ENCODE measurements at regions of chr20 and their contacts with region 1.

Region 1: GRCh38 chr20:13771853-13772453 is 12.8 kb downstream of the ESF1 start:
- DNase-seq: peak in 4 of 9 donors; percentile 8 to 30 (median 18)
- ATAC-seq: peak; percentile 48
- H3K4me3 ChIP-seq: no peak overlapping the region
- H3K4me3 Mint-ChIP-seq: no peak overlapping the region
- H3K27ac ChIP-seq: no peak overlapping the region
- H3K27ac Mint-ChIP-seq: no peak overlapping the region
- H3K4me1 ChIP-seq: no peaks in the 10 kb centered on the region
- H3K4me1 Mint-ChIP-seq: peaks cover 2 to 20% (median 8%) of the 10 kb centered on the region in 7 donors
- H3K27me3 ChIP-seq: no peaks in the 10 kb centered on the region
- H3K27me3 Mint-ChIP-seq: no peaks in the 10 kb centered on the region

Region 2: DNA sequence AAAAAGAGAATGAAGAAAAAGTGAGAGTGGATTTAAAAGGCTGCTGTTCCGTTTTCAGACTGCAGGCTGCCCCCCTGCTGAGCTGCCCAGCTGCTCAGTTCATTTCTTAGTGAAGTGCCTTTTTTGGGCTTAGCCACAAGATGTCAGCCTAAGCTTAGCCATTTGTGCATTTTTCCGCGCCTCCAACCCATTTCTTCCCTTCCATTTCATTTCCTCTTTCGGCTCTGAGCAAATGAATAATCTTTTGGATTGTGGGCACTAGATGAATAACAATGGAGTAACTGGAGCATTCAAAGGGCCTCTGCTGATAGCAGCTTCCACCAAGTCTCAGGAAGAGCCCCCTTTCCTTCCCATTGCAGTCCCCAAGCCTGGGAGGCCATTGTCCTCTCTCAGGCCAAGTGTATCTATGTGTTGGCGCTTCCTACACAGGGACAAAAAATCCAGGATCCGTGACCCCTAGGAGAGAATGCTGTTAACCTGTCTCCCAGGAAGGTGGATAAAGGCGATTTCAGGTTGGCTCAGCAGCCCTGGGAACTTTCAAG is 846.7 kb before region 1 on chr20:
- CTCF ChIA-PET with region 1: no interaction called
- POLR2A ChIA-PET with region 1: no interaction called
- intact Hi-C with region 1: loop called in 1 of 2 experiments (anchors 5 kb)
- DNase-seq: peak in 6 of 9 donors; percentile 5 to 48 (median 20)
- ATAC-seq: peak; percentile 73
- H3K4me3 ChIP-seq: no peak overlapping the region
- H3K4me3 Mint-ChIP-seq: peak overlapping the region in 1 of 10 donors; percentile 23
- H3K27ac ChIP-seq: no peak overlapping the region
- H3K27ac Mint-ChIP-seq: no peak overlapping the region
- H3K4me1 ChIP-seq: no peaks in the 10 kb centered on the region
- H3K4me1 Mint-ChIP-seq: peaks cover 0 to 15% (median 0%) of the 10 kb centered on the region in 7 donors
- H3K27me3 ChIP-seq: peaks cover 0 to 2% of the 10 kb centered on the region in 2 donors
- H3K27me3 Mint-ChIP-seq: peaks cover 0 to 27% (median 6%) of the 10 kb centered on the region in 5 donors

Region 3: GRCh38 chr20:13119583-13119982 is 652.4 kb before region 1 on chr20:
- CTCF ChIA-PET with region 1: interaction called, 5 read pairs
- POLR2A ChIA-PET with region 1: no interaction called
- intact Hi-C with region 1: loop called (anchors 1 to 2 kb)
- DNase-seq: peak in 8 of 9 donors; percentile 6 to 76 (median 66)
- ATAC-seq: peak; percentile 82
- H3K4me3 ChIP-seq: no peak overlapping the region
- H3K4me3 Mint-ChIP-seq: no peak overlapping the region
- H3K27ac ChIP-seq: no peak overlapping the region
- H3K27ac Mint-ChIP-seq: no peak overlapping the region
- H3K4me1 ChIP-seq: no peaks in the 10 kb centered on the region
- H3K4me1 Mint-ChIP-seq: no peaks in the 10 kb centered on the region
- H3K27me3 ChIP-seq: no peaks in the 10 kb centered on the region
- H3K27me3 Mint-ChIP-seq: no peaks in the 10 kb centered on the region

Region 4: GRCh38 chr20:13458860-13459451 is 313.0 kb before region 1 on chr20:
- CTCF ChIA-PET with region 1: no interaction called
- POLR2A ChIA-PET with region 1: no interaction called
- intact Hi-C with region 1: loop called (anchors 1 to 5 kb)
- DNase-seq: peak in 2 of 9 donors; percentile 1 to 7
- ATAC-seq: no peak
- H3K4me3 ChIP-seq: no peak overlapping the region
- H3K4me3 Mint-ChIP-seq: no peak overlapping the region
- H3K27ac ChIP-seq: no peak overlapping the region
- H3K27ac Mint-ChIP-seq: no peak overlapping the region
- H3K4me1 ChIP-seq: no peaks in the 10 kb centered on the region
- H3K4me1 Mint-ChIP-seq: no peaks in the 10 kb centered on the region
- H3K27me3 ChIP-seq: no peaks in the 10 kb centered on the region
- H3K27me3 Mint-ChIP-seq: no peaks in the 10 kb centered on the region

Region 5: GRCh38 chr20:13610184-13610583 is 161.8 kb before region 1 on chr20:
- CTCF ChIA-PET with region 1: interaction called, 4 read pairs
- POLR2A ChIA-PET with region 1: no interaction called
- intact Hi-C with region 1: loop called in 1 of 2 experiments (anchors 5 kb)
- DNase-seq: no peak
- ATAC-seq: peak; percentile 40
- H3K4me3 ChIP-seq: no peak overlapping the region
- H3K4me3 Mint-ChIP-seq: no peak overlapping the region
- H3K27ac ChIP-seq: no peak overlapping the region
- H3K27ac Mint-ChIP-seq: no peak overlapping the region
- H3K4me1 ChIP-seq: no peaks in the 10 kb centered on the region
- H3K4me1 Mint-ChIP-seq: peaks cover 0 to 6% (median 0%) of the 10 kb centered on the region in 7 donors
- H3K27me3 ChIP-seq: no peaks in the 10 kb centered on the region
- H3K27me3 Mint-ChIP-seq: no peaks in the 10 kb centered on the region

Measured in naive thymus-derived CD4-positive, alpha-beta T cell (primary cell).